Psoas muscle (tissue), 8 donors: ENCODE measurements at regions of chr2 and their contacts with region 1.

Region 1: GRCh38 chr2:73021371-73022010 is 50.0 kb downstream of the SFXN5 start:
- DNase-seq: no peak
- ATAC-seq: no peak
- H3K4me3 ChIP-seq: no peak overlapping the region
- H3K27ac ChIP-seq: no peak overlapping the region
- H3K4me1 ChIP-seq: no peaks in the 10 kb centered on the region
- H3K27me3 ChIP-seq: no peaks in the 10 kb centered on the region
- CTCF ChIP-seq: no peak

Region 2: GRCh38 chr2:72827999-72828646 is 193.4 kb before region 1 on chr2:
- intact Hi-C with region 1: no loop called
- DNase-seq: no peak
- ATAC-seq: no peak
- H3K4me3 ChIP-seq: no peak overlapping the region
- H3K27ac ChIP-seq: no peak overlapping the region
- H3K4me1 ChIP-seq: peaks cover 14% of the 10 kb centered on the region
- H3K27me3 ChIP-seq: no peaks in the 10 kb centered on the region
- CTCF ChIP-seq: no peak

Region 3: GRCh38 chr2:73043929-73044832 is 22.7 kb after region 1 on chr2:
- intact Hi-C with region 1: loop called in 1 of 2 experiments (anchors 2 kb)
- DNase-seq: no peak
- ATAC-seq: no peak
- H3K4me3 ChIP-seq: no peak overlapping the region
- H3K27ac ChIP-seq: no peak overlapping the region
- H3K4me1 ChIP-seq: no peaks in the 10 kb centered on the region
- H3K27me3 ChIP-seq: no peaks in the 10 kb centered on the region
- CTCF ChIP-seq: no peak